Astrocyte of the cerebellum (primary cell): ENCODE measurements at regions of chr6 and their contacts with region 1.

Region 1: DNA sequence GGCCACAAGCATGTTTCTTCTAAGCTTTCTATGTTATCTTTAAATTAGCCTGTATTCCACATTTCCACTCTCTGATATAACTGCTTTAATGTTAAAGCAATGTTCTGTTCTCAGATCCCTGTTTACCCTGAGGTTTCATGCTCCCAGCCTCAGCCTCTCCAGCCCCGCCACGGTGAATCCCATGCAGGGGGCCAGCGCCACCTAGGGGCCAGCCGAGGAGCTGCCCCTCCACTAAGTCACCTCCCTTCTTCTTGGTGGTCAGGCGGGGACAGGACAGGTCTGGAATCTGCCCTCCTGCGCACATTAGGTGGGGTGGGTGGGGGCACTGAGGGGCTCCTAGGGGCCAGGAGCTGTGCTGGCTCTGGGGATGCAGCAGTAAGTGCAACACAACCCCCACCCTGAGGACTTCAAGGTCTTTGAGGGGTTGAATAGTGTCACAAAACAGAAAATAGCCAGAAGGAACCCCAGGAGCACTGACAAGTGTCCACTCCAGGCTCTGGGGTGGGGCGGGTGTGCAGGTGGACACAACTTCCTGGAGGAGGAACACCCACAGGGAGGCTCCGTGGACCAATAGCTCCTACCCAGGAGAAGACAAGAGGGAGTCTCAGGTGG is 61.6 kb downstream of the RAB44 start:
- DNase-seq: peak; percentile 40
- H3K4me3 ChIP-seq: no peak overlapping the region
- CTCF ChIP-seq: peak; percentile 97

Region 2: GRCh38 chr6:36360241-36361054 is 398.8 kb before region 1 on chr6:
- in situ Hi-C with region 1: no loop called
- DNase-seq: peak; percentile 59
- H3K4me3 ChIP-seq: no peak overlapping the region
- CTCF ChIP-seq: peak; percentile 78

Region 3: GRCh38 chr6:36623547-36624459 is 135.5 kb before region 1 on chr6:
- in situ Hi-C with region 1: loop called (anchors 5 kb)
- DNase-seq: peak; percentile 82
- H3K4me3 ChIP-seq: no peak overlapping the region
- CTCF ChIP-seq: peak; percentile 86

Region 4: DNA sequence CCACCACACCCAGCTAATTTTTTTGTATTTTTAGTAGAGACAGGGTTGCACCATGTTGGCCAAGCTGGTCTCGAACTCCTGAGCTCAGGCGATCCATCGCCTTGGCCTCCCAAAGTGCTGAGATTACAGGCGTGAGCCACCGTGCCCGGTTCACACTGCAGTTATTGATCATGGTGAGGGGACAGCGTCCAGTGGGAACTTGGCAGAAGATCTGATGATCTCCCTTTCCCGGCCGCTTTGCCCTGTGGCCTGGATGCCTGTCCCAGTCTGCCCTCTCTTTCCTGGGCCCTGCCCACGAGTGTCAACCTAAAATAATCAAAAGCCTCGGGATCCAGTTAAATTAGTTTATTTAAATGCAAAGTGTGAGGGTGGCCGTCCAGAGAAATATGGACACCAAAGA is 37.8 kb after region 1 on chr6:
- in situ Hi-C with region 1: no loop called
- DNase-seq: no peak
- H3K4me3 ChIP-seq: no peak overlapping the region
- CTCF ChIP-seq: no peak

Region 5: DNA sequence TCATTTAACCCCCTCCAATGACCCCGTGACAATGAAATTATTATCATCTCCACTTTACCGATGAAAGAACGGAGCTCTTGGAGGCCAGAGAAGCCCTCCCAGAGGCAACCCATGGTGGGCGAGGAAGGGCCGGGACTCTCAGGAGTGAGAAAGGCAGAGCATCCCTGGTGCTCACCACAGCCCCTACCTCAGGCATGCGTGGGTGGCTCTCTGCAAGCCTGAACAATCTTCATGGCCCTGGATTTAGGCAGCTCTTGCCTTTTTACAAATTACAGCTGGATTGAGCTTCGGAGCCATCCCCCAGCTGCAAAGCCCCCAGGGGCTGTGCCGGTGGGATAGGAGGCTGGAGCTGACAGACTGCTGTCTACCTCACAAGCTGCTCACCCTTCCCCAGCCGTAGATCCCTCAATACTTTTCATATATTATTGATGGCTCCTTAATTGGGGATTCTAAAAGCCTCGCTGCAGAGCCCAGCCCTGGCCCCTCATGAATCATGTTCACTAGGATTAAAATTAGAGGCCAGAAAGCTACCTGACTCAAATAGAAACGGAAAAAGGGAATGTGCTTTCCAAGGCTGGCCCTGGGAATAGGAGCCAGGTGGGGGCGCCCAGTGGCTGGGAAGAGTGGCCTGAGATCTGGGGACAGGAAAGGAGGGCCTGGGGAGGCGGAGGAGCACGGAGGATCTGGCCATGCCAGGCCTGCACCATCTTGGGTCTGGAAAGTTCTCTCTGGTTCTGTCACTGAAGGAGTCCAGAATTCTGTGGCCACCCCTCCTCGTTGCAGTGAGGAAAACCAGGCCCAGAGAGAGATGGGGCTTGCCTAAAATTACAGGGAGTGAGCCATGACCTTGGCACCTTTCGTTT is 50.9 kb after region 1 on chr6:
- in situ Hi-C with region 1: loop called (anchors 5 kb)
- DNase-seq: no peak
- H3K4me3 ChIP-seq: no peak overlapping the region
- CTCF ChIP-seq: no peak

Region 6: GRCh38 chr6:36820700-36821580 is 61.7 kb after region 1 on chr6:
- in situ Hi-C with region 1: no loop called
- DNase-seq: no peak
- H3K4me3 ChIP-seq: no peak overlapping the region
- CTCF ChIP-seq: no peak

Region 7: DNA sequence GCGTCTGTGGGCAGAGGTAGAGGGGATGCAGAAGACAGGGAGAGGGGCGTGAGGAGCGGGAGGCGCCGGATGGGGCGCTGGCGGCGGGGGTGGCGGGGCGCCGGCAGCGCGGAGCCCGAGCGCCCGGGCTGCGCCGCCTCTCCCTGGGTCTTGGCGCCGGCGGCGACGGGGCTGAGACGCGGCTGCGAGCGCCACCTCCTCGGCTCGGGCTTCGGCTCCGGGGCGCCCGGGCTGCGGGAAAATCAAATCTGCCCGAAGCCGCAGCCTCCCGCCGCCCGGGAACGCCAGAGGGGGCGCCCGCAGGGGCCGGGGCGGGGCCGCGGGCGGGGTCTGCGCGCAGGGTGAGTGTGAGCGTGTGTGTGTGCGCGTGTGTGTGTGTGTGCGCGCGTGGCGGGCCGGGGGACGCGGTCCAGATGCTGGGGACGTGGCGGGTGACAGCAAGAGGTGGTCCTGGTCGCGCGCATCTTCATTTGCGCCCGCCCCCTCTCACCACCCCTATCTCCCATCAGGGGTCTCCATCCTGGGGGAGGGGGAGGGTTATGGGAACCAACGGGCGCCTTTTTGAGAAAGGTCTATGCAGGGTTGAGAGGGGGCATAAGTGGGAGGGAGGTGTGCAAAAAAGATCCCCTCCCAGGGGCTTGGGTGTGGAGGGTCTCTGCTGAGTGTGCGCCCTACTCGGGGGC is 80.6 kb after region 1 on chr6:
- in situ Hi-C with region 1: loop called (anchors 10 kb)
- DNase-seq: no peak
- H3K4me3 ChIP-seq: peak overlapping the region; percentile 41
- CTCF ChIP-seq: no peak